ENCODE measurements at regions of chr2 and their contacts with region 1.

Region 1: GRCh38 chr2:27016801-27017325 is 15.9 kb upstream of the TMEM214 start:
- H3K4me3 ChIP-seq: no peak overlapping the region
- H3K27ac ChIP-seq: no peak overlapping the region
- H3K4me1 ChIP-seq: 0 out of 2 replicates have a peak, but pooled peaks cover 3% of the 10 kb centered on the region
- CTCF ChIP-seq: peak; percentile 29; the same call in 1 of the 2 replicates

Region 2: DNA sequence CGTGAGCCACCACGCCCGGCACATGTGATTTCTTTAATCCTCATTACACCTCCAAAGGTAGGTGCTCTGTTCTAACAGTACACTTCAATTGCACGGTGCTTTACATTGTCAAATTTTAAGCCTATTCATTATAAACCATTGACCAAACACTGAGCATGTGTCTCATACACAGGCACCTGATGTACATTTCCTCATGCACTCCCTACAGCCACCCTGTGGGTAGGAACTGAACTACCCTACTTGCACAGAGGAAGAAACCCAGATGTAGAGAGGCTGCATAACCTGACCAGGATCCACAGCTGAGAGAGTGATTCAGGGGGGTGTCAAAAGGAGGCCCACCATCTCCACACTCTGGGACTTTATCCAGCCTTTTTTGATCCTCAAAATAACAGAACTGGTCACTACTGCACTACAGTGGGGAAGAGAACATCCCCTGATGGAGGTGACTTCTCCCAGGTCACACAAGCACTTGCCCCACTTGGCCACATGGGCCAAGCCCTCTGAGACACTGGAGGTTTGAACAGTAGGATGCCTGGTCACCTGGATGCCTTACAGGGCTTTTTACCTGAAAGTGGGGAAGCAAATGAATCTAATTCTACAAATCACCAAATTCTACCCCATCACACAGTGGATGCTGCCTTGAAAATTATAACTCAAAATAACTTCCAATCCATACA is 175.8 kb before region 1 on chr2:
- CTCF ChIA-PET with region 1: interaction called, 53 read pairs
- POLR2A ChIA-PET with region 1: no interaction called
- H3K4me3 ChIP-seq: no peak overlapping the region
- H3K27ac ChIP-seq: no peak overlapping the region
- H3K4me1 ChIP-seq: no peaks in the 10 kb centered on the region
- CTCF ChIP-seq: no peak

Region 3: GRCh38 chr2:26952374-26952773 is 64.5 kb before region 1 on chr2:
- CTCF ChIA-PET with region 1: interaction called, 307 read pairs
- POLR2A ChIA-PET with region 1: interaction called, 3 read pairs
- H3K4me3 ChIP-seq: no peak overlapping the region
- H3K27ac ChIP-seq: no peak overlapping the region
- H3K4me1 ChIP-seq: peaks cover under 1% of the 10 kb centered on the region; the same call in 1 of the 2 replicates
- CTCF ChIP-seq: no peak

Region 4: GRCh38 chr2:26970244-26970920 is 46.5 kb before region 1 on chr2 and contains the start of gene MAPRE3:
- CTCF ChIA-PET with region 1: interaction called, 307 read pairs
- POLR2A ChIA-PET with region 1: no interaction called
- H3K4me3 ChIP-seq: peak within 1 kb of the TSS; percentile 53
- H3K27ac ChIP-seq: no peak within 1 kb of the TSS
- H3K4me1 ChIP-seq: peaks cover 8% of the 10 kb centered on the region; the same call in 1 of the 2 replicates
- CTCF ChIP-seq: no peak

Region 5: DNA sequence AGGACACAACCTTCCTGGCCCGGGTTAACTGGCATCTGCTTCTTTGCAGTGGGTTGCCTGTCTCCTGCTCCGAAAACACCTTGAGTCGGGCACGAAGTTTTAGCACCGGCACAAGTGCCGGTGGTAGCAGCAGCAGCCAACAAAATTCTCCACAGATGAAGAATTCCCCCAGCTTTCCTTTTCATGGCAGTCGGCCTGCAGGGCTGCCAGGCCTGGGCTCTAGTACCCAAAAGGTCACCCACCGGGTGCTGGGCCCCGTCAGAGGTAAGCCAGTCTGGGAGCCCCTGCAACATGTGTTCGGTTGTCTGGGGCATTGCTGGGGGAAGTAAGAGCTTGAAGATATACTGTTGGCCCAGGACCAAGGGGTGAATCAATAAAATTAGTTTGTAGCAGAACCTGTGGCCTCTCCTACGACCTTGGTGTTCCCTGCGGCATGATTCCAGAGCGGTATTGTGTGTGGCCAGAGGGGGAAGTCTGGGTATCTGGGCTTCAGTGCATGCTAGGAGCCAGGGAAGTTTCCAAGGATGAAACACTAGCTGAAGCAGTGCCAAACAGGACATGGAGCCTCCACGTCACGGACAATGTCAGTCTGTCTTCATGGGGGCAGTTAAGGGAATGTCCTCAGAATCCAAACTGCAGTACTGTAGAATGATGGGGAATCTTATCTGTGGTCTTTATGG is 42.4 kb after region 1 on chr2:
- CTCF ChIA-PET with region 1: no interaction called
- POLR2A ChIA-PET with region 1: interaction called, 11 read pairs
- H3K4me3 ChIP-seq: no peak overlapping the region
- H3K27ac ChIP-seq: no peak overlapping the region
- H3K4me1 ChIP-seq: no peaks in the 10 kb centered on the region
- CTCF ChIP-seq: no peak